ENCODE measurements at regions of chr5 and their contacts with region 1.

Region 1: DNA sequence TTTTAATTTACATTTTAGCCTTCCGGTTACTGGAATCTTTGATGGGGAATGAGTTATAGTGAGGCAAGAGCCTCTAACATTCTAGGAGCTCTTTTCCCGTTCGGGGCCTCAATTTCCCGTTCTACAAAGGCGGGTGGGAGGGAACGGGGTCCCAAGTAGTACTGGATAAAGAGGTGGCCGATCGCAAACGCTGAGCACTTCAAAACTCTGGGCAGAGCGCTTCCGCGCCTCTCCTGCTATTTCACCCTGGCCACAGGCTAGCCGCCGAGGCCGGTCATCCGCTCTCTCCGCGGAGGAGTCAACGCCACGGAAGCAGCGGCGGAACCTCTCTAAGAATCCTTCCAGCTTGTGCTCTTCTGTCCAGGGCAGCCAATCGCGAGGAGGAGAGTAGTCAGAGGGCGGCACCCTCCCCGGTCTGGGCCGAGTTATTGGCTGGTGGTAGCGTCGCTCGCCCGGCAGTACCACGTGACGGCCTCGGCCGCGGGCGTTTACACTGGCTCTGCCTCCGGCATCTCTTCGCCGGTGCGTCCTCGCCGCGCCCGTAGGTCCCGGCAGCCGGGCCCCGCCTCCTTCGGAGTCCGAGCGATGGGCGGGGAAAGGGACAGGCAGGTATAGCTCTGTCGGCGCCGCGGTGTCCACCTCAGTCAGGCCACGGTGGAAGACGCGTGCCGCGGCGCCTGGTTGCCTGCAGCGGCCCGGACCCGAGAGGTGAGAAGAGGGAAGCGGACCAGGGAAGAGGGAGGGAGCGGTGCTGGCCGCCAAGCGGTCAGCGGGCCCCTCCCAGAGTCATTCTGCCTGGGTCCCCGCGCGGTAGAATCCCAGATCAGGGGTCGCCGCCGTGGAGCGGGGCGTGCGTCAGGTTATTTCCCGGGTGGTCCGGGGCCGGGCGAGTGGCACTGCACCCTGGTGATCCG is at the start of gene SLC26A2:
- DNase-seq: peak; percentile 100
- H3K4me3 Mint-ChIP-seq: peak within 1 kb of the TSS; percentile 96
- H3K27ac Mint-ChIP-seq: peak within 1 kb of the TSS; percentile 97
- H3K4me1 Mint-ChIP-seq: peaks cover 38% of the 10 kb centered on the region
- H3K27me3 Mint-ChIP-seq: no peaks in the 10 kb centered on the region
- CTCF ChIP-seq: no peak
- total RNA-seq, gene SLC26A2: 44.1 and 56.2 TPM in 2 replicates

Region 2: DNA sequence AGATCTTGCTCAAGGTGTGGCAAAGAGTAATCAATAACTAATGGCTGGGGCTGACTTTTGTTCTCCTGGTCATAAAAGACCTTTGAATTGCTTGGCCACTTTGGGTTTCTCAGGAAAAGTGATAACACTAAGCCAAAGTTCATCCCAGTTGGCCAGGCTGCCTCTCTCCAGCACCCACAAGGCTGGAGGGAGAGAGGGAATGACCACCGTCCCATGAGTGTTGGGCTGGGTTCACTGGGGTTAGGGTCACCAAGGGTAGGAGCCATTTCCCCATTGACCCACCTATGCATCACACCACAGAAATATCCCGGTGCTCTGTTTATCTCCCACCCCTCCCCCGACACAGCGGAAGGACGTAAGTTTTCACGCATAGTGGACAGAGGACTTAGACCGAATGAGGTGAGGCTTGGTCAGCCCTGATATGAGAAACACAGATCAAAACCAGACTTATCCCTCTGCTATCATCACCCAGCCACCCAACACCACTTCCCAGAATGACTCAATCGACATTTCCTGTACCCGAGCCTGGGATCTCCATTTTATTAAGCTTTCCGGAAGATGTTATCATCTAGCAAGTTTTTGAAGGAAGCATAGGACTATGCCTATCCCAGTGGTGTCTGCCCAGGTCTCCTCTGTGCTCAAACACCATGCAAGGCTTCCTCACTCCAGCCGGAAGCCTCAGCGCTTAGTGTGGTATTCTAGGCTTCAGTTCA is 257.4 kb before region 1 on chr5:
- CTCF ChIA-PET with region 1: no interaction called
- POLR2A ChIA-PET with region 1: no interaction called
- intact Hi-C with region 1: no loop called
- DNase-seq: no peak
- H3K4me3 Mint-ChIP-seq: no peak overlapping the region
- H3K27ac Mint-ChIP-seq: no peak overlapping the region
- H3K4me1 Mint-ChIP-seq: no peaks in the 10 kb centered on the region
- H3K27me3 Mint-ChIP-seq: peaks cover 65% of the 10 kb centered on the region
- CTCF ChIP-seq: no peak

Region 3: DNA sequence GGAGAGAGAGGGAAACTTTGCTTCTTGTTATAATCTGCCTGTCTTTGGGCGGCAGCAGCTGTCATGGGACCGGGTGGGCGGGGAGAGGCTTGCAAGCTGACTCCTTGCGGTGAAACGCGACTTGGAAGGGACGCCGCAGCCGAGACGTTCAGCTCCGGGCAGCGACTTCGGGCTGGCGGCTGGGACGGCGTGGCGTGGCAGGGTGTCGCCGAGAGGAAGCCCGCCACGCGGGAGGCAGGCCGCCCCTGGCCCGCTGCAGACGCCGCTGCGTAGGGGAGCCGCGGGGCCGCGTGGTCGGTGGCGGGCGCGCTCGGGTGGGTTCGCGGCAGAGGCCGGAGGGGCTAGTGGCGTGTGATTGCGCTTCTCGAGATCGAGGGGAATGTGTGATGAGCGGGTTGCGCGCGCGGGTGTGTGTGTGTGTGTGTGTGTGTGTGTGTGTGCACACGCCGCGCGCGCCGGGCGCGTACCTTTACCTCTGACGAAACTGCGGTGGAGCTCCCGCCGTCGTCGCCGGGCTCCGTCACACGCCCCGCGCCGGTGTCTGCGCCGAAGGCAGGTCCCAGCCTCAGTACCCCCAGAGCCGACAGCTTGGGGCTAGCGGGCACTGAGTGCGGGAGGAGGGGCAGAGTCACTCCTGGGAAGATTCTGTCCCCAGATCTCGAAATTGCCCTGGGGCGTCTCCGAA is 228.7 kb before region 1 on chr5:
- CTCF ChIA-PET with region 1: interaction called, 6 read pairs
- POLR2A ChIA-PET with region 1: interaction called, 13 read pairs
- intact Hi-C with region 1: no loop called
- DNase-seq: peak; percentile 95
- H3K4me3 Mint-ChIP-seq: peak overlapping the region; percentile 94
- H3K27ac Mint-ChIP-seq: peak overlapping the region; percentile 66
- H3K4me1 Mint-ChIP-seq: peaks cover 27% of the 10 kb centered on the region
- H3K27me3 Mint-ChIP-seq: no peaks in the 10 kb centered on the region
- CTCF ChIP-seq: no peak

Region 4: DNA sequence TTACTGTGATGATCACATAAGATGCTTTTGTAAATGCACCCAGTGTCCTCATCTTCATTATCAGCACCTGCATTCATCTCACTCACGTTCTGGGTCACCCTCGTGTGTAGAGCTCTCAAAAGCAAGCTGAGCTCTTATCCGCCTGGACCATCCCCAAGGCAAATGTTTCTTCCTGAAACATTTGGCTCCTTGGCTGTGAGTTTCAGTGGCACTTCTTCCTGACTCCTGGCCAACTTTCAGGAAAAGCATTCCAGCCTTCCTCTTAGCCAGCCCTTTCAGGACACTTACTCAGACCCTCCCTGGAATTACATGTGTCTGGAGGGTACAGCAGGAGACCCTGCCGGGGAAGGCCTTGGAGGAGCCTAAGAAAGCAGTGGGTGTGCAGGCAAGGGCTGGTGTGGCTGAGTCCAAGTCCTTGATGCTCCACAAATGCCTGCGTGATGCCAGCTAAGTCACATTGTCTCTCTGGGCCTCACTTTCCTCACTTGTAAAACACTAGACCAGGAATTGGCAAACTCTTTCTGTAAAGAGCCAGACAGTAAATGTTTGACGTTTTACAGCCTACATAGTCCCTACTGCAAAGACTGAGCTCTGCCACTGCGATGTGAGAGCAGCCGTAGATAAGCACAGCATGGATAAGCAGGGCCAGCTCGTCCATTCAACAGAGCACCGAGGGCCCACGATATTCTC is 88.0 kb before region 1 on chr5:
- CTCF ChIA-PET with region 1: interaction called, 1,621 read pairs
- POLR2A ChIA-PET with region 1: interaction called, 18 read pairs
- intact Hi-C with region 1: no loop called
- DNase-seq: no peak
- H3K4me3 Mint-ChIP-seq: no peak overlapping the region
- H3K27ac Mint-ChIP-seq: no peak overlapping the region
- H3K4me1 Mint-ChIP-seq: peaks cover 4% of the 10 kb centered on the region
- H3K27me3 Mint-ChIP-seq: no peaks in the 10 kb centered on the region
- CTCF ChIP-seq: no peak

Region 5: DNA sequence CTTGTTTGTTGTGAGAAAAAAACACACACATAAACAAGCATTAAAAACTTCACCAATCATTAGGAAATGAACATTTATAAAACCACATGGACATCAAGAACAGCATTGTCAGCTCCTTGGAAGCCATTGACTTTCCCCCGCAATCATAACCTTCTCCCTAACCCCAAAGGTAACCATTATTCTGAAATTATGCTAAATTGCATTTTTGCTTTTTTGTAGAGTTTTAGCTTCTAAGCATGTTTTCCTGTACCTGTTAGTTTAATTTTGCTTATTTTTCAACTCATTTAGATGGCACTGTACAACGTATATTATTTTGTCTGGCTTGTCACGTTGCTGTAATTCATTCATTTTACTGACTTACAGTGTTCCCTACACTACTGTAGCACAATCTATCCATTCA is 52.7 kb before region 1 on chr5:
- CTCF ChIA-PET with region 1: interaction called, 31 read pairs
- POLR2A ChIA-PET with region 1: interaction called, 49 read pairs
- intact Hi-C with region 1: no loop called
- DNase-seq: no peak
- H3K4me3 Mint-ChIP-seq: no peak overlapping the region
- H3K27ac Mint-ChIP-seq: no peak overlapping the region
- H3K4me1 Mint-ChIP-seq: peaks cover 26% of the 10 kb centered on the region
- H3K27me3 Mint-ChIP-seq: no peaks in the 10 kb centered on the region
- CTCF ChIP-seq: no peak

Region 6: DNA sequence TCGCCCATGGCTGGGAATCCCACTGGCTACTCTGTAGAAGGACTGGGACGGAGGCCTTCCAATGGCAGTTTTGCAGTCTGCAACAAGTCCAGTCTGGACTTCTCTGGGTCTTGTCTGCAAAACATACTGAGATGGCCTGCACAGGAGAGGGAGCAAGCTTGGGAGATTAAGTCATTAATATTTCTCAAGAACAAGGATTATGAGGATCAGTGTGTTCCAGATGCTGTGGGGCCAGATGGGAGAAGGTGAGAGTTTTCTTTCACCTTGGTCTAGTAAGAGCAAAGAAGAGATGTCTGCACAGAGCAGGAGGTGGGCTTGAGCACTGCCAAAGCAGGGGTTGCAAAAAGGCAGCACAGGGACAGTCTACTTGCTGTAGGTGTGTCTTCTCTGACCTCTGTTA is 15.9 kb before region 1 on chr5 and contains the start of gene PDE6A:
- CTCF ChIA-PET with region 1: interaction called, 20 read pairs
- POLR2A ChIA-PET with region 1: interaction called, 58 read pairs
- intact Hi-C with region 1: loop called (anchors 1 kb)
- DNase-seq: no peak
- H3K4me3 Mint-ChIP-seq: no peak within 1 kb of the TSS
- H3K27ac Mint-ChIP-seq: peak within 1 kb of the TSS; percentile 32
- H3K4me1 Mint-ChIP-seq: peaks cover 49% of the 10 kb centered on the region
- H3K27me3 Mint-ChIP-seq: no peaks in the 10 kb centered on the region
- CTCF ChIP-seq: no peak
- total RNA-seq, gene PDE6A: 0.22 and 0.42 TPM in 2 replicates

Region 7: DNA sequence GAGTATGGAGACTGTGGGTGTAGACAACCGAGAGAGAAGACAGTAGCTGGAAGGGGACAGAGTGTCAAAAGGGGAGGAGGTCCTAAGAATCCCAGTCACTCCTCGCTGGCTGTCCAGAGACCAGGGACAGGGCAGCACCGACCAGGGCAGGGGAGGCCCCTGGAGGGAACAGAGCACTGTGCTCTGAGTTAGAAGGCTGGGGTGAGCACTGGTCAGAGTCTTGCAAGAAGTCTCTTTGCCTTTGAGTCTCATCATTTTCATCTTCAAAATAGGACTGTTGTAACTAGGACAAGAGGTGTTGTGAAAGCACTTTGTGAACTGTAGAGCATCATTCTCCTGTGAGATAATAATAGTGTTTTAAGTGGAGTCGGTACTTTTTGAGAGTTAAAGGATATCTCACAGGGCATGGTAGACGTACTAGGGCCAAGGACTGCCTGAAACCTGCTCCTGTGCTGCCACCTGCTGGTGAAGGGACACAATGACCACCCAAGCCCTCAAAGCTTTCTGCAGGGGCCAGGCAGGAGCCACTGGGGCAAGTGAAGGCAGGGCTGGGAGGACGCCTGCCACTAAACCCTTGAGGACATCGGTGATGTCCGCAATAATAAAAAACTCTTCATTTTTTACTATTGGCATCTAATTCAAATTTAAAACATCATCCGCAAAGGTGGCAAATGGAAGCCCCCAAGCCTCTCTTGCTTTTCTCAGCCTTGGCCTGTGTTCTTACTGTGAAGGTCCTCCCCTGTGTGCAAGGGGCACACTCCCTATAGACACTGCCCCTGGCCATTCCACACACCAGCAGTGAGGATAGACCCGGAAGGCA is 257.6 kb after region 1 on chr5:
- CTCF ChIA-PET with region 1: interaction called, 4 read pairs
- POLR2A ChIA-PET with region 1: no interaction called
- intact Hi-C with region 1: loop called (anchors 1 kb)
- DNase-seq: peak; percentile 93
- H3K4me3 Mint-ChIP-seq: no peak overlapping the region
- H3K27ac Mint-ChIP-seq: no peak overlapping the region
- H3K4me1 Mint-ChIP-seq: no peaks in the 10 kb centered on the region
- H3K27me3 Mint-ChIP-seq: no peaks in the 10 kb centered on the region
- CTCF ChIP-seq: peak; percentile 98

Region 8: GRCh38 chr5:150394131-150394530 is 433.6 kb after region 1 on chr5:
- CTCF ChIA-PET with region 1: no interaction called
- POLR2A ChIA-PET with region 1: no interaction called
- intact Hi-C with region 1: no loop called
- DNase-seq: no peak
- H3K4me3 Mint-ChIP-seq: no peak overlapping the region
- H3K27ac Mint-ChIP-seq: no peak overlapping the region
- H3K4me1 Mint-ChIP-seq: no peaks in the 10 kb centered on the region
- H3K27me3 Mint-ChIP-seq: no peaks in the 10 kb centered on the region
- CTCF ChIP-seq: no peak